CD4-positive, alpha-beta T cell (primary cell): ENCODE measurements at regions of chr16 and their contacts with region 1.

Region 1: GRCh38 chr16:11909653-11910545 is 5.9 kb downstream of the GSPT1 start:
- DNase-seq: no peak
- ATAC-seq: no peak
- H3K4me3 ChIP-seq: no peak overlapping the region
- H3K4me3 Mint-ChIP-seq: peak overlapping the region; percentile 79
- H3K27ac ChIP-seq: no peak overlapping the region
- H3K27ac Mint-ChIP-seq: peak overlapping the region; percentile 61
- H3K4me1 ChIP-seq: peaks cover 44% of the 10 kb centered on the region
- H3K4me1 Mint-ChIP-seq: peaks cover 73% of the 10 kb centered on the region
- H3K27me3 ChIP-seq: no peaks in the 10 kb centered on the region
- H3K27me3 Mint-ChIP-seq: no peaks in the 10 kb centered on the region
- CTCF ChIP-seq: no peak

Region 2: DNA sequence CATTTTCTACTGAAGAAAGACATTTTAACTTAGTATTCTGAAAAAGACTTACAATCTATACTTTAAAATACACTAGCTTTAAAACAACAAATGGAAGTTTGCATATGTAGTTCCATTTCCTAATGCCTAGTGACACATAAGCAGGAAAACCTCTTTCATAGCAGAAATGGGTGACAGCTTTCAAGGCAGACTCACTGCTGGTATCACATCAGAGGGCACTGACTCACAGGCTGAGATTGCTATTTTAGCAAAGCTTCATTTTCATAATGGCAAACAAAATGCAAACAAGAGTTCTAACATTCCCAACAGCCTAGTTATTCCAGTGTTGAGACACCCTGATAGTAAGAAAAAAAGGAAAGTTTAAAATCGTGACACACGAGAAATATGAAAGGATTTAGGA is 13.1 kb before region 1 on chr16:
- CTCF ChIA-PET with region 1: interaction called, 3 read pairs
- POLR2A ChIA-PET with region 1: no interaction called
- intact Hi-C with region 1: loop called (anchors 2 kb)
- DNase-seq: no peak
- ATAC-seq: no peak
- H3K4me3 ChIP-seq: no peak overlapping the region
- H3K4me3 Mint-ChIP-seq: no peak overlapping the region
- H3K27ac ChIP-seq: no peak overlapping the region
- H3K27ac Mint-ChIP-seq: no peak overlapping the region
- H3K4me1 ChIP-seq: peaks cover 22% of the 10 kb centered on the region
- H3K4me1 Mint-ChIP-seq: peaks cover 52% of the 10 kb centered on the region
- H3K27me3 ChIP-seq: no peaks in the 10 kb centered on the region
- H3K27me3 Mint-ChIP-seq: no peaks in the 10 kb centered on the region
- CTCF ChIP-seq: no peak